ENCODE measurements at regions of chr5 and their contacts with region 1.

Region 1: GRCh38 chr5:177390363-177391300 is 6.4 kb downstream of the SLC34A1 start:
- DNase-seq: peak; percentile 74 to 83 (median 82)
- ATAC-seq: peak; percentile 86 to 95 (median 93)
- H3K4me3 ChIP-seq: no peak overlapping the region
- H3K27ac ChIP-seq: no peak overlapping the region
- H3K4me1 ChIP-seq: no peaks in the 10 kb centered on the region
- H3K27me3 ChIP-seq: no peaks in the 10 kb centered on the region
- CTCF ChIP-seq: peak; percentile 97 to 99 (median 98)
- POLR2A ChIP-seq: no peak

Region 2: GRCh38 chr5:177070536-177071191 is 320.0 kb before region 1 on chr5:
- intact Hi-C with region 1: no loop called
- DNase-seq: no peak
- ATAC-seq: no peak
- H3K4me3 ChIP-seq: no peak overlapping the region
- H3K27ac ChIP-seq: no peak overlapping the region
- H3K4me1 ChIP-seq: peaks cover 0 to 11% (median 2%) of the 10 kb centered on the region in 4 donors
- H3K27me3 ChIP-seq: no peaks in the 10 kb centered on the region
- CTCF ChIP-seq: no peak
- POLR2A ChIP-seq: no peak

Region 3: GRCh38 chr5:177311723-177312648 is 78.6 kb before region 1 on chr5 and contains the start of gene MXD3:
- intact Hi-C with region 1: loop called in 1 of 2 experiments (anchors 10 kb)
- DNase-seq: peak; percentile 97 to 98 (median 97)
- ATAC-seq: peak; percentile 85 to 92 (median 88)
- H3K4me3 ChIP-seq: peak within 1 kb of the TSS; percentile 33 to 58 (median 51)
- H3K27ac ChIP-seq: no peak within 1 kb of the TSS
- H3K4me1 ChIP-seq: peaks cover 0 to 12% (median 7%) of the 10 kb centered on the region in 4 donors
- H3K27me3 ChIP-seq: no peaks in the 10 kb centered on the region
- CTCF ChIP-seq: no peak
- POLR2A ChIP-seq: no peak
- total RNA-seq, gene MXD3: 2.2 to 6.2 (median 4.9) TPM

Region 4: GRCh38 chr5:177500685-177501522 is 110.3 kb after region 1 on chr5:
- intact Hi-C with region 1: loop called in 1 of 2 experiments (anchors 5 kb)
- DNase-seq: peak; percentile 89 to 94 (median 90)
- ATAC-seq: peak; percentile 50 to 60 (median 54)
- H3K4me3 ChIP-seq: no peak overlapping the region
- H3K27ac ChIP-seq: no peak overlapping the region
- H3K4me1 ChIP-seq: no peaks in the 10 kb centered on the region
- H3K27me3 ChIP-seq: no peaks in the 10 kb centered on the region
- CTCF ChIP-seq: peak; percentile 81 to 97 (median 96)
- POLR2A ChIP-seq: no peak

Measured in right lobe of liver (tissue), 6 donors.